ENCODE measurements at regions of chr2 and their contacts with region 1.

Region 1: DNA sequence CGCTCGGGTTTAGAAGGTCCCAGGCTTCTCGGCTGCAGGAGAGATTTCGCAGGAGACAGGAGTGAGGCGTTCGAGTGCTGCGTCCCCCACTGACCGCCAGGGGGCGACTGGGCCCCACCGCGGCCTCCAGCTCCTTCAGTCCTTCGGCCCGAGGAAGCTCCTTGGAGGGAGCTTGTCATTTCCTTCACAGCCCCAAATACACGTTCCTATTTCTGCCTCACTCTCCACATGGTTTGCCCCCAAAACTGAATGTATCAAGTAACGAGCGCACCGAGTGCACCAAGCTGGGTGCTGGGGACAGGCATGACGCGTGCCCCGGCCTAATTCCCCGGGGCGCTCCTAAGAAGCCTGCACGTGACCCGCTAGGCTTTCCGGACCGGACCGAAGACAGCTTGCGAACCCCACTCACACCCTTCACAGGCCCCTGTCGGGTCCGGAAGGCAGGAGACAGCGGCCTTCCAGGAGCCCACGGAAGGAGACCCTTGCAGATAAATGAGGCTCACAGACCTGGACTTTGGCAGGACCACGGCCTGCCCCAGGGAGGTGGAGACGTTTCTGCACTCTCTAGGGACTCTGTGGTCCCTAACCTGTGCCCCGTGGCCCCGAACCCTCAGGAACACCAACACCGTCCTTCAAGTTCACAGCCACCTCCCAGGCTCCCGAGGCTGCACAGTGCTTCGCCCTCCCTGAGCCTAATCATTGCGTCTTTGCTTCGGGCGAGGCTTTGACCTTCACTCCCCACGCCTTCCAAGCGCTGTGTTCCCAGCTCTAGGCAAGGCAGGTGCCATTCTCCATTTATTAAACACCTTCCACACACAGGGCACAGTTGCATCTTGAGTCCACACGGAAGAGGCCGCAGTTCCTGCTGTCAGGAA is 13.0 kb upstream of the FAHD2A start:
- DNase-seq: peak; percentile 64
- H3K4me3 Mint-ChIP-seq: no peak overlapping the region
- H3K27ac Mint-ChIP-seq: no peak overlapping the region
- H3K4me1 Mint-ChIP-seq: no peaks in the 10 kb centered on the region
- H3K27me3 Mint-ChIP-seq: no peaks in the 10 kb centered on the region

Region 2: DNA sequence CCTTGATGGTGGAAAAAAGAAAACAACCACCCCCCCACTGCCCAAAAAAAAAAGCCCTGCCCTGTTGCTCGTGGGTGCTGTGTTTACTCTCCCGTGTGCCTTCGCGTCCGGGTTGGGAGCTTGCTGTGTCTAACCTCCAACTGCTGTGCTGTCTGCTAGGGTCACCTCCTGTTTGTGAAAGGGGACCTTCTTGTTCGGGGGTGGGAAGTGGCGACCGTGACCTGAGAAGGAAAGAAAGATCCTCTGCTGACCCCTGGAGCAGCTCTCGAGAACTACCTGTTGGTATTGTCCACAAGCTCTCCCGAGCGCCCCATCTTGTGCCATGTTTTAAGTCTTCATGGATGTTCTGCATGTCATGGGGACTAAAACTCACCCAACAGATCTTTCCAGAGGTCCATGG is 335.9 kb before region 1 on chr2:
- CTCF ChIA-PET with region 1: no interaction called
- POLR2A ChIA-PET with region 1: no interaction called
- intact Hi-C with region 1: no loop called
- DNase-seq: no peak
- H3K4me3 Mint-ChIP-seq: no peak overlapping the region
- H3K27ac Mint-ChIP-seq: no peak overlapping the region
- H3K4me1 Mint-ChIP-seq: peaks cover 56% of the 10 kb centered on the region
- H3K27me3 Mint-ChIP-seq: no peaks in the 10 kb centered on the region

Region 3: DNA sequence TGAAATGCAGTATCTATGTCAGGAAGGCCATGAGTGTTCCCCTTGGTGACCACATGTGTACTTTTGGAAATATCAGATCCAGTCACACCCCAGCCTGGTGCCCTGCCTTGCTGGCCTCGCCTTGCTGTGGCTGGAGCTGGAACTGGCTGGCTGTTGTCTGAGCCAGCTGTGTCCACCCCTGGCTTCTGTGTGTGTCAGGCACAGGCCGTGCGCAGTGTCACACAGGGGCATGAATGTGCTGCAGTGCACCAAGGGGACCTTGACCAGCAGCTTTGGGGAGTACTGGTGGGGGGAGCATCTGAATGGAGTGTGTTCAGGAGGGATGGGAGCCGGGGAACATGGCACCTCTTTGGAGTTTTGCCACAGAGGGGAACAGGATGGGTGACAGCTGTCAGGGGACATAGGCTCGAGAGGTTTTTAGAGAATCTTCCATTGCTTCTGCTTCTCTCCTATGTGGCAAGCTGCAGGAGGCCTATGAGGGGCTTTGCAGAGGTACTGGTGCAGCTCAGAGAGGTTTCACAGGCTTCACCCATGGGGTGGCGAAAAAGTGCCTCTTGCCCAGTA is 31.7 kb before region 1 on chr2:
- CTCF ChIA-PET with region 1: no interaction called
- POLR2A ChIA-PET with region 1: no interaction called
- intact Hi-C with region 1: no loop called
- DNase-seq: no peak
- H3K4me3 Mint-ChIP-seq: no peak overlapping the region
- H3K27ac Mint-ChIP-seq: no peak overlapping the region
- H3K4me1 Mint-ChIP-seq: no peaks in the 10 kb centered on the region
- H3K27me3 Mint-ChIP-seq: peaks cover 2% of the 10 kb centered on the region

Region 4: DNA sequence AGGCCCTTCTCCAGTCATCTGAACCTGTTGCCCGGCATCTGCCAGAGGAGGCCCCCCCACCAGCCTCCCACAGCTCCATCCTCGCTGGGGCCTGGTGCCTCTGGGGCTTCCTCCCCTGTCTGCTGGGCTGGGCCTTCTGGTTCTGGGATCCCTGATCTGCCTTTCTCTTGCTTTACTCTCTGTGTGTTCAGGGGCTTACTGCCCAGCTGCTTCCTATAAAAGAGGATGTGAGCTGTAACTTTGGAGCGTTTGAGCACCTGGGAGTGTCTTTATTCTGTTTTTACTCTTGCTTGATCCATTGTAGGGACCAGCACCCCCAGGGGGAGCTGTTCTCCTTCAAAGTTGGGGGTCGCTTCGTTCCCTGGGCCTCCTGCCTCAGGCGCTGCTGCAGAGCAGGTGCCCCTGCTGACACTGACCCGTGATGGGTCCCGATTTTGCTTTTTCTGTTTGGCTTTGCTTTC is 10.1 kb before region 1 on chr2:
- CTCF ChIA-PET with region 1: interaction called, 15 read pairs
- POLR2A ChIA-PET with region 1: no interaction called
- intact Hi-C with region 1: no loop called
- DNase-seq: no peak
- H3K4me3 Mint-ChIP-seq: no peak overlapping the region
- H3K27ac Mint-ChIP-seq: no peak overlapping the region
- H3K4me1 Mint-ChIP-seq: no peaks in the 10 kb centered on the region
- H3K27me3 Mint-ChIP-seq: peaks cover 6% of the 10 kb centered on the region

Measured in activated CD4-positive, alpha-beta memory T cell treated with anti-CD3 and anti-CD28 coated beads for 36 hours (primary cell).